ENCODE measurements at regions of chr1 and their contacts with region 1.

Region 1: DNA sequence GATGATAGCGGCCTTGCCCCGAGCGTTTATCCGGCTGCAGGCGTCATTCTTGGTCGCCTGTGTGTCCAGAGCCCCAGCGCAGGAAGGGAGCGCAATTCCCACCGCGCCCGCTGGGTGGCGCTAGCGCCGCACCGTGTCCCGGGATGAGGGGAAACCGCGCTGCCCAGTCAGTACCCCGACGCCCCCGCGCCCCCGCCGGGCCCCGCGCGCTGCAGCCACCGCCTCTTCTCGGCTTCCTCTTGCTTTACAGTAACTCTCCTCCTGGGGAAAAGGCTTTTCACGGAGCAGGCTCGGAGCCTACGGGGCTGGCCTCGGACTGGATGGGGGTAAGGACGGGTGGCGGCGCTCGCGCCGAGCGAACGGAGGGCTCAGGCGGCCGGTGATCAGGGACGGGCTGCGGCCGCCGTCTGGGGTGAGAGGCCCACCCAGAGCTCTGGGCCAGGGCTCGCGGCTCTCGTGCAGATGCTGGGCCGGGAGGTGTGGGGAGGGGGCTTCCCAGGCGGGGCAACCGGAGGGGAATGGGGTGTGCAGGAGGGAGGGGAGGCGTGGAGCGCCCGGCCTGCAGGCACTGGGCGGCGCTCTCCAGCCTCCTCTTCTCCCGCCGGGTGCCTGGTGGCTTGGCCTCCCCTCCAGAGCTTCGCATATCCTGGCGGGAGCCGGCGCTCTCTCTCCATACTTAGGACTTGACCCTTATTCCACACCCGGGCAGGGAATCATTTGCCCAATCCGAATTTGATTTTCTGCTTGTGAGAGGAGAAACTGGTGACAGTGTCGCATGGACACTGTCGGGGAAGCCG is 29.8 kb downstream of the TEX35 start:
- DNase-seq: peak; percentile 88 to 97
- H3K4me3 ChIP-seq: peak overlapping the region; percentile 72
- H3K4me3 Mint-ChIP-seq: peak overlapping the region; percentile 90
- H3K27ac Mint-ChIP-seq: peak overlapping the region; percentile 91
- H3K4me1 ChIP-seq: peaks cover 21% of the 10 kb centered on the region
- H3K4me1 Mint-ChIP-seq: peaks cover 13% of the 10 kb centered on the region
- H3K27me3 ChIP-seq: no peaks in the 10 kb centered on the region
- H3K27me3 Mint-ChIP-seq: no peaks in the 10 kb centered on the region
- CTCF ChIP-seq: peak; percentile 85 to 98

Region 2: GRCh38 chr1:178532392-178532791 is 10.4 kb before region 1 on chr1:
- CTCF ChIA-PET with region 1: interaction called, 14 read pairs
- POLR2A ChIA-PET with region 1: no interaction called
- intact Hi-C with region 1: loop called (anchors 1 kb)
- DNase-seq: peak; percentile 85 to 87
- H3K4me3 ChIP-seq: no peak overlapping the region
- H3K4me3 Mint-ChIP-seq: no peak overlapping the region
- H3K27ac Mint-ChIP-seq: no peak overlapping the region
- H3K4me1 ChIP-seq: peaks cover 37% of the 10 kb centered on the region
- H3K4me1 Mint-ChIP-seq: peaks cover 27% of the 10 kb centered on the region
- H3K27me3 ChIP-seq: no peaks in the 10 kb centered on the region
- H3K27me3 Mint-ChIP-seq: no peaks in the 10 kb centered on the region
- CTCF ChIP-seq: peak; percentile 91 to 93

Region 3: DNA sequence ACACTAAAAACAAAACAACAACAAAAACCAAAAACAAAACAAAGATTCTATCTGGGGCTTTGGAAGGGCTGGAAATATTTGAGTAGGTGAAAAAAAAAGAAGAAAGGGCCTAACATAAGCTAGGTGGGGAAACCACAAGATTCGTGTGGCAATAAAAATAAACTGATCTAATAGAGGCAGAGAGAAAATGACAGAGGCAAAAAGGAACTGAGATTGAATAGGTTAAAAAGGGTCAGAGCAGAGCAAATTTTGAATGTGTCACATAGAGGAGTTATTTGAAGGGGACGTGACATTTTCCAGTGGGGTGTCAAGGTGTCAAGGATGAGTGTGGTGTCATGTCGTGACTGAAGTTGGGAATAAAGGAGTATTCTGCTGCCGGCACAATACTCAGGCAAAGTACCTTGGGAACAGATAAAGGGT is 117.0 kb after region 1 on chr1:
- CTCF ChIA-PET with region 1: no interaction called
- POLR2A ChIA-PET with region 1: interaction called, 3 read pairs
- intact Hi-C with region 1: loop called (anchors 2 kb)
- DNase-seq: no peak
- H3K4me3 ChIP-seq: no peak overlapping the region
- H3K4me3 Mint-ChIP-seq: no peak overlapping the region
- H3K27ac Mint-ChIP-seq: no peak overlapping the region
- H3K4me1 ChIP-seq: peaks cover 20% of the 10 kb centered on the region
- H3K4me1 Mint-ChIP-seq: peaks cover 11% of the 10 kb centered on the region
- H3K27me3 ChIP-seq: no peaks in the 10 kb centered on the region
- H3K27me3 Mint-ChIP-seq: no peaks in the 10 kb centered on the region
- CTCF ChIP-seq: no peak

Region 4: GRCh38 chr1:178725603-178726517 is 183.1 kb after region 1 on chr1:
- CTCF ChIA-PET with region 1: interaction called, 23 read pairs
- POLR2A ChIA-PET with region 1: interaction called, 5 read pairs
- intact Hi-C with region 1: loop called (anchors 1 kb)
- DNase-seq: peak; percentile 83 to 93
- H3K4me3 ChIP-seq: peak overlapping the region; percentile 89
- H3K4me3 Mint-ChIP-seq: peak overlapping the region; percentile 89
- H3K27ac Mint-ChIP-seq: peak overlapping the region; percentile 86
- H3K4me1 ChIP-seq: peaks cover 10% of the 10 kb centered on the region; the same call in 1 of the 2 replicates
- H3K4me1 Mint-ChIP-seq: peaks cover 6% of the 10 kb centered on the region
- H3K27me3 ChIP-seq: no peaks in the 10 kb centered on the region
- H3K27me3 Mint-ChIP-seq: no peaks in the 10 kb centered on the region
- CTCF ChIP-seq: no peak

Region 5: DNA sequence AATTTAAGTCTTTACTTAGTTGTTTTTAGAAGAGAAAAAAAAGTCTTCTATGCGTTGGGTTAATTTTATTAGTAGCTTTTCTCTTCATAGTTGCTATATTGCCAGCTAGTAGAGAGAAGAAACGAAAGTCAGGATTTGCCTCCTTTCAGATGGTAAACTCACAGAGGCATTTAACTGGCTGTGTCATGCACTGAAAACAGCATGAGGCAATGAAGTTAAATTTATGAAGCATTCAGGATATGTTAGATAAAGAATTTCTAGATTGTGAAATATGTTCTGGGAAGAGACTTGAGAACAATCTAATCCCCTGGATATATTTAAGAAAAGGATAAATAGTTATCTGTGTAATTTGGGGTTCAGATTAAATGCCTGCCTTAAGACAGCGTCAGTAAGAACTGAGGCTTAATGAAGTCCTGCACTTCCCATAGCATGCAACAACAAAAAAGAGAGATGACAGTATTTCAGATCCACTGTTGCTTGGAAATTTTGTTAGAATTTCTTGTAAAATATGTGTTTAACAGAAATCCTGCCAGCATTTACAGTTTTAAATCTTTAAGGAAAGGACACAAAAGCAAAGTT is 326.4 kb after region 1 on chr1:
- CTCF ChIA-PET with region 1: no interaction called
- POLR2A ChIA-PET with region 1: no interaction called
- intact Hi-C with region 1: loop called (anchors 10 kb)
- DNase-seq: no peak
- H3K4me3 ChIP-seq: no peak overlapping the region
- H3K4me3 Mint-ChIP-seq: no peak overlapping the region
- H3K27ac Mint-ChIP-seq: no peak overlapping the region
- H3K4me1 ChIP-seq: no peaks in the 10 kb centered on the region
- H3K4me1 Mint-ChIP-seq: peaks cover 4% of the 10 kb centered on the region
- H3K27me3 ChIP-seq: no peaks in the 10 kb centered on the region
- H3K27me3 Mint-ChIP-seq: no peaks in the 10 kb centered on the region
- CTCF ChIP-seq: no peak

Region 6: DNA sequence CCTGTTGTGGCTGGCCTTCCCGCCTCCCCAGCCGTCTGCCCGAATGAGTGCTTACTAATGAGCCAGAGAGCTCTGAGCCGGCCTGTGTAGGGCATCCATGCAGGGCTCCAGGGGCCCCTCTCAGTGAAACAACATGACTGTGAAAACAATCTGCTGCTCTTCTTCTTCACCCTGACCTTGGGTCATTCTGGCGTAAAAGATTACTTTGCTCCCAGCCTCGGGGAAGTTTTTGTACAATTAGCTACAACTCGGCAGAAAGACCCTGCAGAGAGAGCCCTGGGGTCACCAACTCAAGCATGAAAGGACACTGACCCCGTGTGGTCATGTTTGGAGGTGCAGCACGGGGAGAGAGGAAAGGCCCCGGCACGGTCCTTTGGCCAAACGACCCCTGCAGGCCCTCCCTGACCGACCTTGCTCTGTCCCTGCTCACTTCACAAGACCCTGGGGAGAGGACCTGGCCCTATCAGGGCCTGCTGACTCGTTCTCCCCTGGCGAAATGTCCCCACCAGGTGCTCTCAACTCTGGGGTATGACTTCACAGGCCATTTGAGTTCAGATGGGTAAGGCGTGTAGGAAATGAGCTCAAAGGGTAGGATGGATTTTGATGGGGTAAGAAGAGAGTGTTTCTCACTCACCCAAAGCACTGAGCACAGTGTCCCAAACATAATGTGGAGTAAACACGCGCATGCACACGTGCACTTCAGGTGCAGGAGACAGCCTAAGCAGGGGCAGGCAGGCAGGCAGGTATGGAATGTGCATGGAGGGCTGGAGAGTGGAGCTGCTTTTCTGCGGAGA is 460.0 kb after region 1 on chr1:
- CTCF ChIA-PET with region 1: interaction called, 45 read pairs
- POLR2A ChIA-PET with region 1: no interaction called
- intact Hi-C with region 1: loop called (anchors 1 kb)
- DNase-seq: peak; percentile 83 to 86
- H3K4me3 ChIP-seq: no peak overlapping the region
- H3K4me3 Mint-ChIP-seq: peak overlapping the region; percentile 28
- H3K27ac Mint-ChIP-seq: peak overlapping the region; percentile 77
- H3K4me1 ChIP-seq: peaks cover 9% of the 10 kb centered on the region
- H3K4me1 Mint-ChIP-seq: peaks cover 7% of the 10 kb centered on the region
- H3K27me3 ChIP-seq: no peaks in the 10 kb centered on the region
- H3K27me3 Mint-ChIP-seq: no peaks in the 10 kb centered on the region
- CTCF ChIP-seq: peak; percentile 95 to 98